Esophagus muscularis mucosa (tissue), 4 donors: ENCODE measurements at regions of chr20 and their contacts with region 1.

Region 1: GRCh38 chr20:47356526-47357295 is at the start of gene ZMYND8:
- DNase-seq: peak; percentile 99
- H3K4me3 ChIP-seq: peak within 1 kb of the TSS; percentile 32 to 47 (median 38)
- H3K27ac ChIP-seq: peak within 1 kb of the TSS; percentile 97 to 100 (median 98)
- H3K4me1 ChIP-seq: peaks cover 100% of the 10 kb centered on the region in 4 donors
- H3K27me3 ChIP-seq: no peaks in the 10 kb centered on the region
- CTCF ChIP-seq: no peak
- EP300 ChIP-seq: no peak
- POLR2A ChIP-seq: no peak
- total RNA-seq, gene ZMYND8: 44.6 to 78.6 (median 65.8) TPM

Region 2: DNA sequence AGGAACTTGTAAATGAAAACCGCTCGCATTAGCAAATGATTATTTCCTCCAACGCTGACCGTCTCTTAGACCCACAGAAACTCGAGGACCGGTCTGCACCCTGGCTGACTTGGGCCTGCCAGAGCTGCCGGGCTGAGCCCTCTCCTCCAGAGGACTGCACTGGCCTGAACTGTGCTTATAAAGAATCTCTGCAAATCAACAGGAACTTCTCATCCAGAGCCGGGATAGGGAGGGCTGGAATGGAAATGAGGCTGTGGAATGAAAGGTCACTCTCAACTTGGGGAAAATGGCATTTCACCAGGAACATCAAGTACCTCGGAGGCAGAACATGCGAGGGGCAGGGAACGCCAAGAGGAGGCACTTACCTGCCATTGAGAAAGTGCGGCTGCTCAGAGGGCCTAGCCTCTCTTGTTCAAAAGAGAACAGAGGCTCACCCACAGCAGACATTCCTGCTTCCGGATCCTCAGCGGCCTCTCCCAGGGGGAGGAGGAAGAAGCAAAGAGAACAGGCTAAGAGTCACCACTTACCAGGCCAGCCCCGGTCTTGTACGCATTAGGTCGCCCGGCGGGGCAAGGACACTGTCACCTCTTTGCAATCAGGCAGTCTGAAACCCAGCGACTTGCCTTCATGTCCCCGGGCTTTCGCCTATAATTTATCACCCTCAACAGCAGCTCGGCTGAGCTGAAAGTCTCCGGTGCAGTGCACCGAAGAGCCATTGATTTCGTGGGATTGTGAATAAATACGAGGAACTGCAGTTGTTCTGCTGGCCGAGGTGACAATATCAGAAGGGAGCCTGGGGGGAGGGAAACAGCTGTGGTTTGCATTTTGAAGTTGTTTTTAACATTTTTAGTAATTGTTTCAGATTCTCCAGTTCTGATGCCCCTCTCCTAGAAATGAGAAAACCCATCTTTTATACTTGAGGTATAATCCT is 37.9 kb before region 1 on chr20:
- intact Hi-C with region 1: loop called (anchors 1 kb)
- DNase-seq: peak; percentile 97
- H3K4me3 ChIP-seq: peak overlapping the region; percentile 40 to 54 (median 45)
- H3K27ac ChIP-seq: peak overlapping the region; percentile 92 to 99 (median 96)
- H3K4me1 ChIP-seq: peaks cover 87 to 100% (median 98%) of the 10 kb centered on the region in 4 donors
- H3K27me3 ChIP-seq: no peaks in the 10 kb centered on the region
- CTCF ChIP-seq: no peak
- EP300 ChIP-seq: peak; percentile 99
- POLR2A ChIP-seq: peak; percentile 60

Region 3: GRCh38 chr20:47334022-47334551 is 22.6 kb before region 1 on chr20:
- intact Hi-C with region 1: loop called (anchors 2 kb)
- DNase-seq: no peak
- H3K4me3 ChIP-seq: peak overlapping the region; percentile 3 to 20 (median 15)
- H3K27ac ChIP-seq: peak overlapping the region; percentile 92 to 99 (median 95)
- H3K4me1 ChIP-seq: peaks cover 93 to 100% (median 99%) of the 10 kb centered on the region in 4 donors
- H3K27me3 ChIP-seq: no peaks in the 10 kb centered on the region
- CTCF ChIP-seq: no peak
- EP300 ChIP-seq: peak; percentile 100
- POLR2A ChIP-seq: no peak